ENCODE measurements at regions of chr15 and their contacts with region 1.

Region 1: DNA sequence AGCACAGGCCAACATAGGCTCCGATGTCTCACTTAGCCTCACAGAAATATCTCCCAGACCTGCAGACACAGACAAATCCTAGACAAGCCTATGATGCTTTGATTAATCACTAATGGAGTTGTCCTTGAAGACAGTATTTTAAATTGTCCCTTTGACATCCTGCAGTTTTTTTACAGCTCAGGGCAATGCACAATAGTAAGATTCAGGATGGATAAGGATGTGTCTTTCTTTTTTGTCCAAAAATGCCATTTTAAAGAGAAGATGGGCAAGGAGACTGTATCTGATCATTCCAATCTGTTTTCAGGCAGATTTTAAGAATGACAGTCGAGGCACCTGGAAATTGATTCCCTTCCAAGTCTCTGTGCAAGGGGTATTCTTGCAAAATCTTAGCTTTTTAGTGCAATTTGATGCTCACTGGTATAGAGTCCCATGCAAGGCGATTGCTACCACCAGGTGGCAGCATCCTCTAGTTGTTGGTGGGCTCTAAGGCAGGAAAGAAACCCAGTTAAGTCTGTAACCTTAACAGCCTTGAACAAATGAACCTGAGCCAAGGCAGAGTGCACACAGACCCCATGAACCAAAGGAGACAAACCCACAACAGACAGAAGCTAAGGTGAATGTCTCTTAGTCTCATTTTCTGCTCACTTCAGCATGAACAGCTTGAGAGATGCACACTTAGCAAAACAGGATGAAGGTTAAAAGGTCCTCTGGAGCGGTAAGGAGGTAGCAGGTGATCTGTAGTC is 51.2 kb upstream of the MINAR1 start:
- DNase-seq: peak; percentile 76
- H3K4me3 ChIP-seq: peak overlapping the region in 1 of 2 experiments; percentile 33; a peak in 1 of 4 replicates
- H3K27ac ChIP-seq: no peak overlapping the region
- H3K4me1 ChIP-seq: peaks cover 0 to 3% of the 10 kb centered on the region in 2 experiments; a peak in 1 of 4 replicates
- H3K27me3 ChIP-seq: no peaks in the 10 kb centered on the region
- CTCF ChIP-seq: peak; percentile 95
- EP300 ChIP-seq: no peak
- RAD21 ChIP-seq: peak; percentile 95

Region 2: DNA sequence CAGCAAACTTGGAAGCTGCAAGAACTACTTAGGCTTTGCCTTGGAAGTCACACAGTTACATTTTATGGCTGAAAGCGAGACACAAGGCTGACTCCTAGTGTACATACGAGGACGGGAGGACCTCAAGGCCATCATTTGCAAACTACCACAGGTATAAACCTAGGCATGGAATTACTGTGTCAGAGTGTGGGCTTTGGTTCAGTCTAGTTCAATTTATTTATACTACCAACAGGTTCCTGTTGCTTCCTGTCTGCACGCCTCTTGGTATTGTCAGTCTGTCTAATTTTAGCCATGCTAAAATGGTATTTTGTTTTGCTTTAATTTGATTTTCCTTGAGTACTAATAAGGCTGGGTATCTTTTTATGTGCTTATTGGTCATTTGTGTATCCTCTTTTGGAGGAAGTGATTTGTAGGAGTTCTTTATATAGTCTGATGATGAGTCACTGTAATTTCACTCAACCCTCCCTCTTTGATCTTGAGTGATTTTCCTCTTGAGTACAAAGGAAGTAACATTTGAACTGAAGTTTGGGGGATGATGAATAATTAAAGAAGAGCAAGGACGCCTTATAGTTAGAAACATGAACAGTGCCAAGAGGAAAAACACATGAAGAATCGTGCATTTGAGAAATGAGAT is 90.2 kb before region 1 on chr15:
- CTCF ChIA-PET with region 1: no interaction called
- POLR2A ChIA-PET with region 1: no interaction called
- DNase-seq: no peak
- H3K4me3 ChIP-seq: no peak overlapping the region
- H3K27ac ChIP-seq: no peak overlapping the region
- H3K4me1 ChIP-seq: no peaks in the 10 kb centered on the region
- H3K27me3 ChIP-seq: no peaks in the 10 kb centered on the region
- CTCF ChIP-seq: no peak
- EP300 ChIP-seq: no peak
- RAD21 ChIP-seq: no peak

Region 3: GRCh38 chr15:79339564-79340314 is 41.2 kb before region 1 on chr15:
- CTCF ChIA-PET with region 1: interaction called, 52 read pairs
- POLR2A ChIA-PET with region 1: no interaction called
- DNase-seq: peak; percentile 25
- H3K4me3 ChIP-seq: no peak overlapping the region; a peak in 1 of 4 replicates
- H3K27ac ChIP-seq: no peak overlapping the region
- H3K4me1 ChIP-seq: peaks cover 0 to 5% of the 10 kb centered on the region in 2 experiments; a peak in 1 of 4 replicates
- H3K27me3 ChIP-seq: no peaks in the 10 kb centered on the region
- CTCF ChIP-seq: peak; percentile 94
- EP300 ChIP-seq: no peak
- RAD21 ChIP-seq: peak; percentile 89

Region 4: DNA sequence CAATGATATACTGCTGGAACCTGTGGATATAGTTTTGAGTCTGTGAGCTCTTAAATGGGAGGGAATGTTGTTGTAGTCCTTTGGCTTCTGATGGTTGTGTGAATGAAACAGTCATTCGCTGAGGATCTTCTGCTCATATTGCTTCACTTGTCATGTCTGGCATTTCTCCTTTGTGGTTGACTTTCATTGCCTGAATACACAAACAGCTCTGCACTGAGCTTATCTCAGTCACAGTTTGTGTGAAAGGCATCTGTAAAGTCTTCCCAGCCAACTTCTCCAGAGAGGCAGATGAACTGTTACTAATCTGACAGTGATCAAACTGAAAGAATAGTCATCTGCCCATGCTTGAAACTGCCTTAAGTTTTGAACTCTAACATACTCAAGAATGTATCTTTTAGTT is 10.2 kb before region 1 on chr15:
- CTCF ChIA-PET with region 1: interaction called, 113 read pairs
- POLR2A ChIA-PET with region 1: no interaction called
- DNase-seq: no peak
- H3K4me3 ChIP-seq: no peak overlapping the region
- H3K27ac ChIP-seq: no peak overlapping the region
- H3K4me1 ChIP-seq: peaks cover under 1 to 12% of the 10 kb centered on the region in 2 experiments; a peak in 2 of 4 replicates
- H3K27me3 ChIP-seq: no peaks in the 10 kb centered on the region
- CTCF ChIP-seq: no peak
- EP300 ChIP-seq: no peak
- RAD21 ChIP-seq: no peak

Region 5: GRCh38 chr15:79418693-79419279 is 37.9 kb after region 1 on chr15:
- CTCF ChIA-PET with region 1: interaction called, 13 read pairs
- POLR2A ChIA-PET with region 1: no interaction called
- DNase-seq: no peak
- H3K4me3 ChIP-seq: no peak overlapping the region
- H3K27ac ChIP-seq: no peak overlapping the region
- H3K4me1 ChIP-seq: no peaks in the 10 kb centered on the region; a peak in 1 of 4 replicates
- H3K27me3 ChIP-seq: no peaks in the 10 kb centered on the region
- CTCF ChIP-seq: no peak
- EP300 ChIP-seq: no peak
- RAD21 ChIP-seq: no peak

Region 6: DNA sequence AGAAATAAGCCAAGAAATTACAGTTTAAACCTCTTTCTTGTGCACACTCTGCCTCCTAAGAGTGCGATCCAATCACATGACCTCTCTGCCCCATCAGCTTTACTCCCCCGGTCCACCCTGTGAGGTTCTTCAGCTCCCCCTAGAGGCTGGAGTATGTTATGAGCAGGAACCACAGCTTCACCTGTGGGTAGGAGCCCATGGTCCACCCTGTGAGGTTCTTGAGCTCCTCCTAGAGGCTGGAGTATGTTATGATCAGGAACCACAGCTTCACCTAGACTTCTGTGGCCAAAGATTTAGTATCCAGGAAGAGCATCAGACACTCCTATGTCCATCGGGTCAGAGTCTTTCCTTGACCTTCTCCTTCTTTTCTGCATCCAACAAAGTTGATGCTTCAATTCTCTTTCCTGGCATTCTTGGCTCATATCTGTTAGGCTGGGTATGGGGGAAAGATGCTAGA is 215.2 kb after region 1 on chr15:
- CTCF ChIA-PET with region 1: interaction called, 193 read pairs
- POLR2A ChIA-PET with region 1: no interaction called
- DNase-seq: peak; percentile 84
- H3K4me3 ChIP-seq: peak overlapping the region in 1 of 2 experiments; percentile 17; a peak in 1 of 4 replicates
- H3K27ac ChIP-seq: no peak overlapping the region
- H3K4me1 ChIP-seq: no peaks in the 10 kb centered on the region
- H3K27me3 ChIP-seq: no peaks in the 10 kb centered on the region
- CTCF ChIP-seq: peak; percentile 71
- EP300 ChIP-seq: no peak
- RAD21 ChIP-seq: peak; percentile 88

Region 7: DNA sequence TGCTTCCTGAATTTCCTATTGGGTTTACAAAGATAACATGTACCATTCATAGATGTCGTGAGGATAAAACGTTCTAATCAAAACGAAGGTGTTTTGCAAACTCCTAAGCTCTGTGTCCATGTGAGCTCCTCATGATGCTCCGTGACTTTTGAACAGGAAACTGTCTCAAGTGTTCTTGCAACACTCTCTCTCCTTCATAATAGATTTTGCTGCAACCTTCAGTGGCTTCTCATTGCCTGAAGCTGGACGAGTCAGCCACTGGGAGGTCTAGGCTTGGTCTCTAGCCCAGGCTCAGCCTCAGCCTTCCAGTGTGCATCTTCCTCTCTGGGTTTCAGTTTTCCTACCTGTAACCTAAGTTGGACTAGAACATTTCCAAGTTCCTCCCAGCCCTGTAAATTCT is 608.8 kb after region 1 on chr15:
- CTCF ChIA-PET with region 1: interaction called, 37 read pairs
- POLR2A ChIA-PET with region 1: no interaction called
- DNase-seq: no peak
- H3K4me3 ChIP-seq: no peak overlapping the region
- H3K27ac ChIP-seq: no peak overlapping the region
- H3K4me1 ChIP-seq: no peaks in the 10 kb centered on the region; a peak in 1 of 4 replicates
- H3K27me3 ChIP-seq: no peaks in the 10 kb centered on the region; the same call in 1 of the 2 replicates
- CTCF ChIP-seq: no peak
- EP300 ChIP-seq: no peak
- RAD21 ChIP-seq: no peak